Transverse colon (tissue), 4 donors: ENCODE measurements at regions of chr14 and their contacts with region 1.

Region 1: GRCh38 chr14:55097881-55098560 is 31.0 kb upstream of the LGALS3 start:
- DNase-seq: peak; percentile 71
- H3K4me3 ChIP-seq: no peak overlapping the region
- H3K27ac ChIP-seq: peak overlapping the region; percentile 42 to 93 (median 60)
- H3K4me1 ChIP-seq: peaks cover 20 to 63% (median 26%) of the 10 kb centered on the region in 4 donors
- H3K27me3 ChIP-seq: no peaks in the 10 kb centered on the region
- CTCF ChIP-seq: no peak
- EP300 ChIP-seq: no peak
- POLR2A ChIP-seq: no peak

Region 2: DNA sequence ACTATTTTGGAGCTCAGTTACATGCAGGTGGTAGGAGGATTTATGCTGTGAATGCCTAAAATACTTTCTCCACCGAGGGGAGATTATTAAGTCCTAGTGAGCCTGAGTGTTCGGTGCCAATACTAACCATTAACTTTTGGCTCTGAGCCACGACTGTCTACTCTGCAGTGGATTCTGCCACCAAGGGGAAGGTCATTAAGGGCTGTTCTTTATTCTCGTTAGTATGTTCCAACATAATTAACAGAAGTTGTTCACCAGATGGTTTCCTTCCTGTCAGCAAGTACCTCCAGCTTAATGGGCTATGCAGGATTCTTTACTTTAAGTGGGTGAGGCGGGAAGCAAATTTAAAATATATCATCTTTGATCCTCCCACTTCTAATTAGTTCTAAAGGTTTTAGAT is 1467.7 kb before region 1 on chr14:
- in situ Hi-C with region 1: no loop called
- intact Hi-C with region 1: no loop called
- DNase-seq: no peak
- H3K4me3 ChIP-seq: no peak overlapping the region
- H3K27ac ChIP-seq: no peak overlapping the region
- H3K4me1 ChIP-seq: no peaks in the 10 kb centered on the region
- H3K27me3 ChIP-seq: no peaks in the 10 kb centered on the region
- CTCF ChIP-seq: no peak
- EP300 ChIP-seq: no peak
- POLR2A ChIP-seq: no peak

Region 3: GRCh38 chr14:55152052-55152753 is 54.2 kb after region 1 on chr14:
- in situ Hi-C with region 1: loop called in 2 of 4 experiments (anchors 5 to 10 kb)
- intact Hi-C with region 1: no loop called
- DNase-seq: no peak
- H3K4me3 ChIP-seq: no peak overlapping the region
- H3K27ac ChIP-seq: no peak overlapping the region
- H3K4me1 ChIP-seq: no peaks in the 10 kb centered on the region
- H3K27me3 ChIP-seq: no peaks in the 10 kb centered on the region
- CTCF ChIP-seq: no peak
- EP300 ChIP-seq: no peak
- POLR2A ChIP-seq: no peak

Region 4: GRCh38 chr14:55160989-55161388 is 63.0 kb after region 1 on chr14:
- in situ Hi-C with region 1: loop called in 2 of 4 experiments (anchors 5 to 10 kb)
- intact Hi-C with region 1: no loop called
- DNase-seq: no peak
- H3K4me3 ChIP-seq: no peak overlapping the region
- H3K27ac ChIP-seq: no peak overlapping the region
- H3K4me1 ChIP-seq: no peaks in the 10 kb centered on the region
- H3K27me3 ChIP-seq: no peaks in the 10 kb centered on the region
- CTCF ChIP-seq: peak; percentile 51 to 70 (median 57)
- EP300 ChIP-seq: no peak
- POLR2A ChIP-seq: no peak